Gastrocnemius medialis (tissue), 4 donors: ENCODE measurements at regions of chr20 and their contacts with region 1.

Region 1: DNA sequence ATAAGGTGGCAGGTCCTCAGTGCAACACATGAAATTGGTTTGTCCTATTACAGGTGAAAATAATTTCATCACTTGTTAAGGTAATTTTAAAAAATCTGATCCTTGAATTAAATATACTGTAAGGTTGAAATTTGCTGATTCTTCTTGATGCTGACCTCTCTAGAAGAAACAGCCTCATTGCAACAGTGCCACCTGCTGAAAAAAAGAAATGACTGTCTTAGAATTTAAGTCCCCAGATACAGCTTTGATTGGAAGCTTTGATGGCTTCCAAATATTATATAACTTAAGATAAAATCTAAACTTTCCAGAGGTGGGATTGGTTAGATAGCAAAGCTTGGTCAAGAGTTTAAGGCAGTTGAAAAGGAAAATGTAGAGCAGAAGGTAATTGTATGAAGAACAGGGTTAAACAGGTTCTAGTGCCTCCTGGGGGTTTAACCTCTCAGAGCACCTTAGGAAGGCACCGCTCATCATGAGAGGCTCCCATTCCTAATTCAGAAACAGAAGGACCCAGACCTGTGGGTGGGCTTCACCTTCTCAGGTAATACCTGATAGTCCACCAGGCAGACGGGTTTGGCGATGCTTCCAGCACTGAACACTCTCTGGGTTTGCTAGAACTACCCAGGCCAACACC is 401.0 kb downstream of the PAX1 start:
- DNase-seq: no peak
- ATAC-seq: no peak
- H3K4me3 ChIP-seq: no peak overlapping the region
- H3K27ac ChIP-seq: no peak overlapping the region
- H3K4me1 ChIP-seq: no peaks in the 10 kb centered on the region
- H3K27me3 ChIP-seq: no peaks in the 10 kb centered on the region
- CTCF ChIP-seq: no peak
- POLR2A ChIP-seq: no peak

Region 2: GRCh38 chr20:21808863-21809664 is 297.4 kb before region 1 on chr20:
- in situ Hi-C with region 1: loop called in 2 of 4 experiments (anchors 25 kb)
- intact Hi-C with region 1: no loop called
- DNase-seq: no peak
- ATAC-seq: no peak
- H3K4me3 ChIP-seq: no peak overlapping the region
- H3K27ac ChIP-seq: no peak overlapping the region
- H3K4me1 ChIP-seq: no peaks in the 10 kb centered on the region
- H3K27me3 ChIP-seq: no peaks in the 10 kb centered on the region
- CTCF ChIP-seq: peak in 3 of 5 experiments; percentile 38 to 56 (median 52)
- POLR2A ChIP-seq: no peak

Region 3: GRCh38 chr20:22248051-22248667 is 141.7 kb after region 1 on chr20:
- in situ Hi-C with region 1: loop called in 1 of 4 experiments (anchors 25 kb)
- intact Hi-C with region 1: no loop called
- DNase-seq: no peak
- ATAC-seq: no peak
- H3K4me3 ChIP-seq: no peak overlapping the region
- H3K27ac ChIP-seq: no peak overlapping the region
- H3K4me1 ChIP-seq: no peaks in the 10 kb centered on the region
- H3K27me3 ChIP-seq: no peaks in the 10 kb centered on the region
- CTCF ChIP-seq: peak in 1 of 5 experiments; percentile 37
- POLR2A ChIP-seq: no peak